PC-9 (cell line): ENCODE measurements at regions of chr9 and their contacts with region 1.

Region 1: GRCh38 chr9:32579706-32580331 is 6.9 kb upstream of the NDUFB6 start:
- DNase-seq: peak; percentile 36 to 41
- H3K4me3 ChIP-seq: no peak overlapping the region
- H3K27ac ChIP-seq: no peak overlapping the region
- H3K4me1 ChIP-seq: no peaks in the 10 kb centered on the region
- H3K27me3 ChIP-seq: no peaks in the 10 kb centered on the region
- CTCF ChIP-seq: peak; percentile 88

Region 2: GRCh38 chr9:32378993-32379729 is 200.7 kb before region 1 on chr9:
- CTCF ChIA-PET with region 1: interaction called, 59 read pairs
- POLR2A ChIA-PET with region 1: no interaction called
- intact Hi-C with region 1: loop called (anchors 1 kb)
- DNase-seq: peak; percentile 35 to 41
- H3K4me3 ChIP-seq: no peak overlapping the region
- H3K27ac ChIP-seq: no peak overlapping the region
- H3K4me1 ChIP-seq: no peaks in the 10 kb centered on the region
- H3K27me3 ChIP-seq: no peaks in the 10 kb centered on the region
- CTCF ChIP-seq: peak; percentile 74